Mucosa of descending colon (tissue), 3 donors: ENCODE measurements at regions of chr1 and their contacts with region 1.

Region 1: DNA sequence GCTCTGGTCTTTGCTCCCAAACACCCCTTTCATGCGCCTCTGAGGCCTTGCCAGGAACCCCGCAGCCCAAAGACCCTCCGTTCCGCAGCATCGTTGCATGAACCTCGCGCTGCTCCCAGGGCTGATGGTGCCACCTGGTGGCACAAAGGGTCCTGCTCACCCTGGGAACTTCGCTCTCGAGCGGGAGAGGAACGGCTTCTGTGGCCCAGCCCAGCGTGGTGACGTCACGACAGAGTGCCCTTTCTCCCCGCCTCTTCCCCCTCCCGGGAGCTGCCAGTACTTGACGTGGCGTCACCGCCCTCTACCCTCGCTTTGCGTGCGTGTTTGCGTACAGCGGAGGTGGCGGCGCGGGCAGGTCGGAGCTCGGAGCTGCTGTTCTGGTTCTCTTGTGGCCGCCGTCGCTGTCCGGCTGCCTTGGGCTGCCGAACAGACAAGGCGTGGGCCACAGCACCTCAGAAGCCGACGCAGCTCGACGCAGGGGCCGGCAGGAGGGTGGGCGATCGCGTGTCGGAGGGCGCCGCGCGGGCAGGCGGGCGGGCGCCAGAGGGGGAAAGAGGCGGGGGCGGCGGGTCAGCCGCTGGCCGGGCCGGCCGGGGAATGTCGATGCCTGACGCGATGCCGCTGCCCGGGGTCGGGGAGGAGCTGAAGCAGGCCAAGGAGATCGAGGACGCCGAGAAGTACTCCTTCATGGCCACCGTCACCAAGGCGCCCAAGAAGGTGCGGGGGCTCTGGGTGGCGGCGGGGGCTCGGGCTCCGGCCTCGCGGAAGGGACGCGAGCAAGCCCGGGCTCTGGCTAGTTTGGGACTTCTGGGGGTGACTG is at the start of gene AHCYL1:
- DNase-seq: peak; percentile 99 to 100 (median 100)
- ATAC-seq: peak; percentile 98
- H3K4me3 ChIP-seq: peak within 1 kb of the TSS; percentile 75
- H3K4me1 ChIP-seq: peaks cover 40% of the 10 kb centered on the region
- CTCF ChIP-seq: peak; percentile 97
- total RNA-seq, gene AHCYL1: 87.5 to 116 (median 87.8) TPM

Region 2: DNA sequence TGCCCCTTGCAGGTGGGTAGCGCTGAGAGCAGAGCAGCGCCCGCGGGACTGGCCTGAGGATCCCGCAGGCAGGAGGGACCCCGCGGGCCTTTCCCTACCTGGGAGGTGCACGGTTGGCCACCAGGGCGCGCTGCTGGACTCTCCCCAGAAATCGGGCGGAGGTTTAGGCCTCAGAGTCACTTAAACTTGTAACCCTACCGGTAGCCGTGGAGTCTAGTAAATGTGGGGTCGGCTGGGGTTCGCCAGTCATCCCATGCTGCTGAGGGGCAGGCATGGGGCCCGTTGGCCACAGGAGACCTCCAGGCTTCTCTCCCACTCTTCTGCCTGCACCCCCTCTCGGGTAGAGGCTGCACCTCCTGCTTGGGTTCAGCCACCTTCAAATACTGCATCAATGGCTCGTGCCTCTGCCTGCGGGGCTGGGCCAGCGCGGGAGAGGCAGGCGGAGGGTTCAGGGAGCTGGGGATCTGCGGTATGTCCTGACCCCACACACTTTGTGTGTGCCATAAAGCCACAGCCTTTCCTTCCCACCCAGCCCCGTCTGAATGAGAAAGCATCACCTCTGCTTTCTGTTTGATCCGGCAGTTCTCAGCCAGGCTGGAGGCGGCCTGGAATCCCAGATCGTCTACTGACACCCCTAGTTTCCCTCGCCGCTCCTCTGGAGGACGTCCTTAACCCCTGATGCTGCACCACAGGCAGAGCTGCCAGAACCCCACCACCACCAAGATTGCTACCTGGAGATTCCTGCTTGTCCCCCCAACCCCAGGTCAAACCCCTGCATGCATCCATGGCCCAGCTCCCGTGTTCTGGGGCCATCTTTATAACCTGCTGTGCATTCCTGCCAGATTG is 341.1 kb before region 1 on chr1:
- intact Hi-C with region 1: loop called in 1 of 2 experiments (anchors 10 kb)
- DNase-seq: peak; percentile 87 to 94 (median 93)
- ATAC-seq: peak; percentile 94
- H3K4me3 ChIP-seq: no peak overlapping the region
- H3K4me1 ChIP-seq: peaks cover 7% of the 10 kb centered on the region
- CTCF ChIP-seq: peak; percentile 85